Head of caudate nucleus (tissue), 42 donors: ENCODE measurements at regions of chr2 and their contacts with region 1.

Region 1: DNA sequence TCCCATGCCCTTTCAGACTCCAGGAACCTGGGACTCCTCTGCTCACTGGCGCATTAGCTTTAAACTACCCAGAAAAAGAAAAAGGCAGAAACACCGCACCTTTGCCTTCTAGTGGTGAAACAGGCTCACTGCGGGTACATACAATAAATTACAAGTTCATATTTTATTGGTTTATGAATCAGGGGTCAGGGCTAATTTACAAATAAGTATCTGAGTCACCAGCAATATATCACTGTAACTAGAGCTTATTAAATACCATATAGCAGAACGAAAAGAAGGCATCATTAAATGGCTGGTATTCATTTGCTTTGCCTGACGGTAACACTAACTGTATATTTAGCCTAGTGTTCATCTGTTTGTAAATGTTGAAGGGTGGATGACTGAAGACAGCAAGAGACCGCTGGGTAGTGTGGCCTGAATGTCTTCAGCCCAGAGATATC is 26.9 kb upstream of the DTNB start:
- DNase-seq: peak in 31 of 42 donors; percentile 8 to 75 (median 43)

Region 2: DNA sequence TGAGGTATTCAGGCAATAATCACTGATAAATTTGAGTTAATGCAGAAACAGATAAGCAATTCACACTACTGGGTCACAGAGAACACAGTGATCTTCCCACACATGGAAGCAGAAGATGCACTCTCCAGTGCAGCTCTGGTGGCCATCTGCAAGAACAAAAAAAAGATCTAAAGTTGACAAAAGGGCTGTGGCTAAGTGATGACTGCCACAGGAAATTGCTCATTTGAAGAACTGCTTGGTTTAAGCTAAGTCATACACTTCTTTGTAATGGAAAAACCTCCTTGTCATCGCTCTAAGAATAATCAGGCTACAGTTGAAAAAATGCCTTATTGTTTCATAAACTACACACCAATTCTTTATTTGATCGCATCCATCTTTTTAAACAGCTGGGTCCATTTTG is 142.0 kb before region 1 on chr2:
- intact Hi-C with region 1: no loop called
- DNase-seq: peak in 1 of 42 donors; percentile 14

Region 3: DNA sequence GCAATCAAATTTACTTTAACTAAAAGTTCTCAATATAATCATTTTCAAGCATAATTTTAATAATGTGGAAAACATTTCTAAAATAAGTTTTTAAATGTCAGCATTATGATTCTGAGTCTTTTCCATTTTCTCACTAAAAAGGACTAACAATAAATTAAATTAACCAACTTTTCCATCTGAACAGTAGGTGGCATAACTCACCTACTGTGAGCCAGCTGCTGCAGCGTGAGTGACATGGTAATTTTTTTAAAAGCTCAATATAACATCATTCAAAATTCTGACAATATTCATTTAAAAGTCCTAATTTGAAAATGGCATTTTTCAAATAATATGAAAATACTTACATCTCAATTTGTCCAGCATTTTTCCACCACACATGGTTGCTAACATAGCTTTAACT is 93.3 kb before region 1 on chr2:
- intact Hi-C with region 1: loop called (anchors 5 kb)
- DNase-seq: peak in 4 of 42 donors; percentile 31 to 46 (median 36)